ENCODE measurements at regions of chr17 and their contacts with region 1.

Region 1: GRCh38 chr17:5092139-5093010 is 14.1 kb downstream of the ZFP3 start:
- H3K4me3 Mint-ChIP-seq: no peak overlapping the region
- H3K27ac Mint-ChIP-seq: no peak overlapping the region
- H3K4me1 Mint-ChIP-seq: peaks cover 11% of the 10 kb centered on the region
- H3K27me3 Mint-ChIP-seq: peaks cover 13% of the 10 kb centered on the region

Region 2: GRCh38 chr17:5184288-5184687 is 91.9 kb after region 1 on chr17:
- intact Hi-C with region 1: loop called (anchors 5 kb)
- H3K4me3 Mint-ChIP-seq: no peak overlapping the region
- H3K27ac Mint-ChIP-seq: no peak overlapping the region
- H3K4me1 Mint-ChIP-seq: no peaks in the 10 kb centered on the region
- H3K27me3 Mint-ChIP-seq: no peaks in the 10 kb centered on the region

Region 3: GRCh38 chr17:5309851-5310250 is 217.5 kb after region 1 on chr17:
- intact Hi-C with region 1: no loop called
- H3K4me3 Mint-ChIP-seq: no peak overlapping the region
- H3K27ac Mint-ChIP-seq: no peak overlapping the region
- H3K4me1 Mint-ChIP-seq: peaks cover 28% of the 10 kb centered on the region
- H3K27me3 Mint-ChIP-seq: no peaks in the 10 kb centered on the region

Measured in dendritic cell treated with granulocyte-macrophage colony-stimulating factor and Interleukin-4, amounts not matched to agents 40 ng/mL and 50 ng/mL, for 4 days (primary cell).